Body of pancreas (tissue), 4 donors: ENCODE measurements at regions of chr1 and their contacts with region 1.

Region 1: DNA sequence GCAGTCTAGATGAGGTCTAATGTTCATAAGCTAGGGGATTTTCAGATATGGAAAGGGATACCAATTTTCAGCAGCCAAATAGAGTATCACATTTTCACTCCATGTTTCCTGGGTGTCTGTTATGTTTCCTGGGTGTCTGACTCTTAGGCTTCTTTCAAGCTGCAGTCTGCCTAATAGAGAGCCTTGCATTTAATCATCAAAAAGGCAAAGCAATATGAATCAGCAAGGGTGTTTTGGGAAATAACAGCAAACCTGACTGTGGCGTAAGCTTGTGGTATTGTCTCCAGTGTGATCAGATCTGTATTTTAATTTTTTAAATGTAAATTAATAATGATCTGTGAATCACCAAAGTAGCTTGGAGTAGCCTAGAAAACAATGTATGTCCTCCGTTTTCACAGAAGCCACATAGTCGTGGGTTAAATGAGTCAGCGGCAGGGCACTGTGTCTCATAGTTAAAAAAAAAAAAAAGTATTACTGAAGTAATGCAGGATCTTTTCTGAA is 10.4 kb downstream of the LGALS8 start:
- DNase-seq: no peak
- ATAC-seq: no peak
- H3K4me3 ChIP-seq: no peak overlapping the region
- H3K27ac ChIP-seq: no peak overlapping the region
- H3K4me1 ChIP-seq: peaks cover 16% of the 10 kb centered on the region
- H3K27me3 ChIP-seq: no peaks in the 10 kb centered on the region
- CTCF ChIP-seq: no peak
- POLR2A ChIP-seq: no peak

Region 2: GRCh38 chr1:236103646-236104218 is 430.5 kb before region 1 on chr1:
- intact Hi-C with region 1: loop called (anchors 10 kb)
- DNase-seq: peak; percentile 55 to 65 (median 58)
- ATAC-seq: peak; percentile 68
- H3K4me3 ChIP-seq: no peak overlapping the region
- H3K27ac ChIP-seq: no peak overlapping the region
- H3K4me1 ChIP-seq: no peaks in the 10 kb centered on the region
- H3K27me3 ChIP-seq: no peaks in the 10 kb centered on the region
- CTCF ChIP-seq: peak; percentile 65 to 91 (median 83)
- POLR2A ChIP-seq: no peak

Region 3: DNA sequence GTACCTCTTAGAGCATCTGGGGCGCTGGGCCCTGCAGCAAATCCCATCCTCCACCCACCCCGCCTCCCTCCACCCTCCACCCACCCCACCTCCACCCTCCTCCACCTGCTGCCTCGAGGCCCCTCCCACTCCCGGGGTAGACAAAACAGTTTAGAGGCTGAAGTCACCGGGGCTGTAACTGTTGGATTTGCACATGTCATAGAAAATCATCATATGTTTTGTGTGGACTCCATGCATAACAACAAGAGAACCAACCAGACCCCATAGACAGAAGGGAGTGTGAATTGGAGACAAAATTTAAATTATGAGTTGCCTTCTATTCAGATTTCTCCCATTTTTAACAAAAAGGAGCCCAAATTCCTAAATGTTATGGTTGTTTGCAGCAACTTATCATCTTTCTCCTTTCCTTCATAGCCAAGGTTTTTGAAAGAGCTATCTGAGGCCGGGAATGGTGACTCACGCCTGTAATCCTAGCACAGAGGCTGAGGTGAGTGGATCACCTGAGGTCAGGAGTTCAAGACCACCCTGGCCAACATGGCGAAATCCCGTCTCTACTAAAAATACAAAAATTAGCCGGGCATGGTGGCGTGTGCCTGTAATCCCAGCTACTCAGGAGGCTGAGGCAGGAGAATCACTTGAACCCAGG is 38.6 kb before region 1 on chr1:
- intact Hi-C with region 1: no loop called
- DNase-seq: no peak
- ATAC-seq: no peak
- H3K4me3 ChIP-seq: no peak overlapping the region
- H3K27ac ChIP-seq: no peak overlapping the region
- H3K4me1 ChIP-seq: no peaks in the 10 kb centered on the region
- H3K27me3 ChIP-seq: no peaks in the 10 kb centered on the region
- CTCF ChIP-seq: no peak
- POLR2A ChIP-seq: no peak